ENCODE measurements at regions of chr6 and their contacts with region 1.

Region 1: GRCh38 chr6:26156076-26156849 is 69.0 kb downstream of the HFE start:
- DNase-seq: peak; percentile 88
- H3K4me3 ChIP-seq: peak overlapping the region; percentile 79
- H3K27ac ChIP-seq: peak overlapping the region; percentile 99
- H3K4me1 ChIP-seq: peaks cover 28% of the 10 kb centered on the region
- CTCF ChIP-seq: no peak

Region 2: DNA sequence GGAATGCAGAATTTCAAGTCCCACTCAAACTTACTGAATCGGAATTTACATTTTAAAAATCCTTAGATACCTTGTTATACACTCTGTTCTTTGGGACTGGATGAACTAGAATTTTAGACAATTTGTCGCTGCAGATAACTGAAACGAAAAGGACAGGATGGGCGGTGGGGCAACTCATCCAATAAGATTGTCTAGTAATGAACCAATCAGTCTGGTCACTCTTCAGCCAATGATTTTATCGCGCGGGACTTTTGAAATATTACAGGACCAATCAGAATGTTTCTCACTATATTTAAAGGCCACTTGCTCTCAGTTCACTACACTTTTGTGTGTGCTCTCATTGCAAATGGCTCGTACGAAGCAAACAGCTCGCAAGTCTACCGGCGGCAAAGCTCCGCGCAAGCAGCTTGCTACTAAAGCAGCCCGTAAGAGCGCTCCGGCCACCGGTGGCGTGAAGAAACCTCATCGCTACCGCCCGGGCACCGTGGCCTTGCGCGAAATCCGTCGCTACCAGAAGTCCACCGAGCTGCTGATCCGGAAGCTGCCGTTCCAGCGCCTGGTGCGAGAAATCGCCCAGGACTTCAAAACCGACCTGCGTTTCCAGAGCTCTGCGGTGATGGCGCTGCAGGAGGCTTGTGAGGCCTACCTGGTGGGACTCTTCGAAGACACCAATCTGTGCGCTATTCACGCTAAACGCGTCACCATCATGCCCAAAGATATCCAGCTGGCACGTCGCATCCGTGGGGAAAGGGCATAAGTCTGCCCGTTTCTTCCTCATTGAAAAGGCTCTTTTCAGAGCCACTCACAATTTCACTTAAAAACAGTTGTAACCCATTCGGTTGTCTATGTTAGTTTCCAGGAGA is 111.0 kb before region 1 on chr6:
- CTCF ChIA-PET with region 1: interaction called, 3 read pairs
- POLR2A ChIA-PET with region 1: interaction called, 18 read pairs
- intact Hi-C with region 1: no loop called
- DNase-seq: peak; percentile 97
- H3K4me3 ChIP-seq: peak overlapping the region; percentile 67
- H3K27ac ChIP-seq: peak overlapping the region; percentile 99
- H3K4me1 ChIP-seq: peaks cover 66% of the 10 kb centered on the region
- CTCF ChIP-seq: peak; percentile 54

Region 3: GRCh38 chr6:26136321-26136720 is 19.9 kb before region 1 on chr6:
- CTCF ChIA-PET with region 1: no interaction called
- POLR2A ChIA-PET with region 1: interaction called, 21 read pairs
- intact Hi-C with region 1: no loop called
- DNase-seq: no peak
- H3K4me3 ChIP-seq: no peak overlapping the region
- H3K27ac ChIP-seq: no peak overlapping the region
- H3K4me1 ChIP-seq: peaks cover 9% of the 10 kb centered on the region
- CTCF ChIP-seq: no peak

Region 4: GRCh38 chr6:26175428-26176181 is 19.3 kb after region 1 on chr6:
- CTCF ChIA-PET with region 1: no interaction called
- POLR2A ChIA-PET with region 1: interaction called, 99 read pairs
- intact Hi-C with region 1: loop called (anchors 1 kb)
- DNase-seq: peak; percentile 79
- H3K4me3 ChIP-seq: peak overlapping the region; percentile 74
- H3K27ac ChIP-seq: peak overlapping the region; percentile 94
- H3K4me1 ChIP-seq: peaks cover 30% of the 10 kb centered on the region
- CTCF ChIP-seq: peak; percentile 95

Region 5: DNA sequence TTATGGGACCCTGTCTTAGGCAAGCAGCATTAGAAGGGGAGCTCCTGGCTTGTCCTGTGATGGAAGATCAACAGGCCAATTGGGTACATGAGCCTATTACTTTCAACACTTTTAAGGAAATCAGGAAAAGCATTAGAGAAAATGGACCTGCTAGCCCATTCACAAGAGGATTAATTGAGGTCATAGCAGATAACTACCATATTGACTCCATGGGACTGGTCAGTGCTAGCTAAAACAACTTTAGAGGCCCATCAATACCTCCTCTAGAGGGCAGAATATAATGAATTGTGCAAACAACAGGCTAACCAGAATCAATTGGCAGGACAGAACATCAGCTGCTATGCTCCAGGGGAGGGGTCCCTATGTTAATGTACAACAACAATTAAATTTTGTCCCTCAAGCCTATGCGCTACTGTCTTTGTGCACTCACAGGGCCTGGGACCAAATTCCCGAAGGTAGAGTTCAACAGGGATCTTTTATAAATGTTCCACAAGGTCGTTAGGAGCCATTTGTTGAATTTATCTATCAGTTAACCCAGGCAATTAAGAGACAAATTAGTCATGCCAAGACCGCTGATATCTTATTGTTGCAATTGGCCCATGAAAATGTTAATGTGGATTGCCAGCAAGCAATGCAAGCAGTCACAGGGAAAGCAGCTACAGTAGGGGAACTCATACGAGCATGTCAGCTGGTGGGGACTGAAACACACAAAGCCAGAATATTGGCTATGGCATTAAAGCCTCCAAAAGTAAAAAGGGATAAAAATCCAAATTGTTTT is 102.1 kb after region 1 on chr6:
- CTCF ChIA-PET with region 1: no interaction called
- POLR2A ChIA-PET with region 1: interaction called, 11 read pairs
- intact Hi-C with region 1: no loop called
- DNase-seq: peak; percentile 33
- H3K4me3 ChIP-seq: no peak overlapping the region
- H3K27ac ChIP-seq: no peak overlapping the region
- H3K4me1 ChIP-seq: peaks cover 12% of the 10 kb centered on the region
- CTCF ChIP-seq: peak; percentile 70

Region 6: GRCh38 chr6:27864906-27865849 is 1708.9 kb after region 1 on chr6:
- CTCF ChIA-PET with region 1: no interaction called
- POLR2A ChIA-PET with region 1: interaction called, 5 read pairs
- intact Hi-C with region 1: loop called (anchors 5 kb)
- DNase-seq: peak; percentile 99
- H3K4me3 ChIP-seq: peak overlapping the region; percentile 67
- H3K27ac ChIP-seq: peak overlapping the region; percentile 99
- H3K4me1 ChIP-seq: peaks cover 60% of the 10 kb centered on the region
- CTCF ChIP-seq: no peak

Region 7: GRCh38 chr6:28117386-28118050 is 1961.3 kb after region 1 on chr6:
- CTCF ChIA-PET with region 1: no interaction called
- POLR2A ChIA-PET with region 1: no interaction called
- intact Hi-C with region 1: no loop called
- DNase-seq: no peak
- H3K4me3 ChIP-seq: no peak overlapping the region
- H3K27ac ChIP-seq: no peak overlapping the region
- H3K4me1 ChIP-seq: no peaks in the 10 kb centered on the region
- CTCF ChIP-seq: peak; percentile 21; the same call in 1 of the 2 replicates

Measured in OCI-LY7 (cell line).